AG04450 (cell line): ENCODE measurements at regions of chr2 and their contacts with region 1.

Region 1: DNA sequence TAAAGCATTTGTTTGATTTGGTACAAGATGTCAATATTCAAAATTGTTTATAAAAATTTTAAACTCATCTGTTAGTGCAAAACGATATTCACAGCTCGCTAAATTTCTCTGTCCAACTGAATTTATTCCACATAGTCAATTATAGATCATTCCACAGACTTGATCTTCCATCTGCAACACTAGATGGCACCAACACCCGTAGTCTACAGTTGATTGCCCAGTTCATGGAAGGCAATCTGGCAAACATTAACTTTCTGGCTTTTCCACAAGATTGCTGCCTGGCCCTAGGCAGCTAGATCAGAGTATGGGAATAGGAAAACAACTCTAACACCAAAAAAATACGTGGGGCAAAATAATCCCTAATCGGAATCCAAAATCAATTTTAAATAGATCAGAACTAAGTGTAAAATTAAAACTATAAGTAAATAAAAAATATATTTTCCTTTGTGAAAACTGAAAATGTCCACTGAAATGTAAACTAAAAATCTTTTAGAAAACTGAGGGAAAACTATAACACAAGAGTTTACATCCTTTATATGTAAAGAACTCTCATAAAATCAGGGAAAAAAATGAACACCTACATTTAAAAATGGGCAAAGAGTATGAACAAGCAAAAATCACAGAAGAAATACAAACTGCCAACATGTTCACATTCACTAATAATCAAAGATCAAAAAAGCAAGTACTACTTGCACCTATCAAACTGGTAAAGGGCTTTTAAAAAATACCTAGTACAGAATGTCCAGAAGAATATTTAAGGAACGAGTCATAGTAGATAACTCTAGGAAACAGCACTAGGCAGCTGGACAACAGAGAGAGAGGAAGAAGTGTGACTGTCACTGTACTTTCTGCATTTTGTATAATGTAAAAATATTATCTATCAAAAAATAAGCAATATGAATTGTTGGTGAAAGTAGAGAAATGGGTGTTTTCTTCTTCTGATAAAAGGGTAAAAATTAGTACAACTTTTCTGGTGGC is 35.0 kb downstream of the RTN4 start:
- DNase-seq: peak; percentile 21
- H3K4me3 ChIP-seq: no peak overlapping the region
- H3K27ac ChIP-seq: no peak overlapping the region
- H3K27me3 ChIP-seq: no peaks in the 10 kb centered on the region
- CTCF ChIP-seq: peak; percentile 61

Region 2: GRCh38 chr2:55026202-55026601 is 11.0 kb after region 1 on chr2:
- CTCF ChIA-PET with region 1: interaction called, 11 read pairs
- POLR2A ChIA-PET with region 1: no interaction called
- DNase-seq: no peak
- H3K4me3 ChIP-seq: no peak overlapping the region
- H3K27ac ChIP-seq: no peak overlapping the region
- H3K27me3 ChIP-seq: no peaks in the 10 kb centered on the region
- CTCF ChIP-seq: no peak

Region 3: DNA sequence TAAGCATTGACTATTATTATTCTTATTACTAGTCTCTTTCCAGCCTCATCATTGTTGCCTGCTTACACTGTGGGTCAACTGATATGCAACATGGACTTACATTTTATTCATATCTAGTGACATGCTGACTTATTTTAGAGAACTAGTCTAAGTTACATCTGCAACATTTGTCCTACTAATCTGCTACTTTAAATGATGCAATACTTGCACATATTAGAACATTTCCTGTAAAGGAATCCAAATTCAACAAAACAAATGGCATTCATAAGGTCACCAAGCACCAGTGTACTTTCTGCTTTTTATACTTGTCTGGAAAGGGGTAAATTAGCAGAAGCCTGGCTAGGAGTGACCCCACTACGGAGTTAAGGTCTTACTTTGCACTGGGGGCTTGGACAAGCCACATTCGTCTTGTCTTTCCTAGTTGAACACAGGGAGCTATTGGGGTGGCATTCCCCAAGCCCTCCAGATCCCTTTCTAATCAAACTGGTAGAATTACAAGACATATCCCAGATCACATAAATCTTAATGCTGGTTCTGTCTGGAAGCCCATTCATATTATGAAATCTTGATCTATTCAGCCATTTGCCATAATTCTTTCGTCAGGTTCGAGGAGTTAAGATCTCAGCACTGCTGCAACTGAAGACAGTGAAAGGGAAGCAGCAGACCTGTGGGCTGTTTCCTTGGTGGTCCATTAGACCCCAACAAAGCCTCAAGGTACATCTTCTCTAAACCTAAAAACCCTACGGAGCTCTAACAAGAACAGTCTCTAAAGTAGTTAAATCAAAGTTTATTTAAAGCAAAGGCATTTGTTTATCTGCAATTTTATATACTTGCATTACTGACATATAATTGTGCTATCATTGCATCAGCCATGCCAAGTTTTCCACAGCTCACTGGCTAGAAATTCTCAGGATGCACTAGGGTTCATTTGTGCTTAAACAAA is 84.9 kb after region 1 on chr2:
- CTCF ChIA-PET with region 1: no interaction called
- POLR2A ChIA-PET with region 1: no interaction called
- DNase-seq: no peak
- H3K4me3 ChIP-seq: peak overlapping the region; percentile 21
- H3K27ac ChIP-seq: peak overlapping the region; percentile 98
- H3K27me3 ChIP-seq: no peaks in the 10 kb centered on the region
- CTCF ChIP-seq: no peak

Region 4: DNA sequence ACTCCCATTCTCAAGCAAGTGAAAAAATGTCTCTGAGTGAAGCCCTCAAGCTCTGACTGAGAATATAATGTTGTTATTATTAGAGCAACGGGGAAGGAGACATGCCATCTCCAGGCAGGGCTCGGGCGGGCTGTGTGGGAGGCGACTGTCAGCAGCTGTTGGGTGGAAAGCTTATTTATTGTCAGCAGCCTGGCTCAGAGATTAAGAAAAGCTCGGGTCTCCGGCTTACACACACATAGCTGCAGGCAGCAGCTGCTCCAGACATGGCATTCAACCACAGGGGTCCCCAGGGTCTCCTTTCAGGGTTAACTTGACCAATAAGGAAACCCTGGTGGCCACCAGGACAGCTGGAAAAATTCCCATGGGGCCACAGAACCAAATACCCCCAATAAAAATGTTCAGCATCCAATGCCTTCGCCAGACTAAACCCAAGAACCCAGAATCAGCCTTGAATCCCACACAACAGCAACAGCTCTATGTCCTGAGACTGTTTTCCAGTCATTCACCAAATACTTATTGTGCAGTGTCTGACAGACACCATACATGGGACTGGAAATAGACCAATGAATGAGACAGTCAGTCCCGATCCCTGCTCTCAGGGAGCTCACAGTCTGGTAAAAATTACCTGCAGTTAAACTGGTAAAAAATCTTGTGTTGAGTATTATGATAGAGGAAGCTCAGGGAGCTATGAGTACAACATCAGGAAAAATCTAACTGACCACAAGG is 105.5 kb after region 1 on chr2:
- CTCF ChIA-PET with region 1: no interaction called
- POLR2A ChIA-PET with region 1: no interaction called
- DNase-seq: no peak
- H3K4me3 ChIP-seq: no peak overlapping the region
- H3K27ac ChIP-seq: peak overlapping the region; percentile 49
- H3K27me3 ChIP-seq: no peaks in the 10 kb centered on the region
- CTCF ChIP-seq: no peak

Region 5: DNA sequence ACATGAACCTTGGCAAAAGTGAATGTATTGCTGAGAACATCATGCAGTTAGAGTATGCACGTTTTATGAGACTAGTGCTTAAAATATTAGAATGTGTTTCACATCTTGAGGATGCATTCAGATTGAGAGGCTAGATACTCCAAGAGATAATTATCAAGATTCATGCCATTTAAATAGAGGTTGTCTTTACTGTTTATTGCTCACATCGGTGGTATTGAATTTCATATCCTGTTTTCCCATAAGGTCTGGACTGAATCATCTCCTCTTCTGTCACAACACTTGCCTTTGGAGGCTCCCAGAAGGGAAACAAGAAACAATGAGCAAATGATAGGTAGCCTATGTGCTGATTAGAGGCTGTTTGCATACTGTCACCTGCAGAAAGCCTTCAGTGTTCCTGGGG is 133.0 kb after region 1 on chr2:
- CTCF ChIA-PET with region 1: no interaction called
- POLR2A ChIA-PET with region 1: no interaction called
- DNase-seq: no peak
- H3K4me3 ChIP-seq: no peak overlapping the region
- H3K27ac ChIP-seq: no peak overlapping the region
- H3K27me3 ChIP-seq: no peaks in the 10 kb centered on the region
- CTCF ChIP-seq: no peak

Region 6: GRCh38 chr2:55357927-55358326 is 342.7 kb after region 1 on chr2:
- CTCF ChIA-PET with region 1: no interaction called
- POLR2A ChIA-PET with region 1: no interaction called
- DNase-seq: no peak
- H3K4me3 ChIP-seq: no peak overlapping the region
- H3K27ac ChIP-seq: no peak overlapping the region
- H3K27me3 ChIP-seq: no peaks in the 10 kb centered on the region
- CTCF ChIP-seq: no peak